PC-3 (cell line): ENCODE measurements at regions of chr13 and their contacts with region 1.

Region 1: DNA sequence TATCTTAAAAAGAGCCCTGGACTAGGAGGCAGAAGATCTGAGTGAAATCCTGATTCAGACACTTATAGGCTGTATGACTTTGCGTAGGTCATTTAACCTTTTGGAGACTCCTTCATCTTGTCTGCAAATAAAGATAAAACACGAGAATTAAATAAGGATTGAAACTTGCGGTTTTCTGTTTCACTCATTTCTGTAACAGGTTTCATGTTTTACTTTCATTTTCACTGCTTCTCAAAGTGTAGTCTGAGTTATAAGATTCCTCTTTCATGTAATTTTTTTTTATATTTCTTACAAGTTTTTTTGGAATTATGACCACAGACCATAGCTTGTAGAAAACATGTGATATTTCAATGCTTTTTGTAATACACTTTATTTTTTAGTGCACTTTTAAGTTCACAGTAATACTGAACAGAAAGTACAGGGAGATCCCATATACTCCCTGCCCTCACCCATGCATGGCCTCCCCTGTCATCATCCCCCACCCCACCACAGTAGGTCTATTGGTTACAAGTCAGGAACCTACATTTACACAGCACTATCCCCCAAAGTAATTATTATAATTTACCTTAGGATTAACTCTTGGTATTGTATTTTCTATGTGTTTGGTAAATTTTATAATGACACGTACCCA is 174.6 kb downstream of the ITGBL1 start:
- DNase-seq: peak; percentile 7
- ATAC-seq: peak; percentile 25
- H3K4me3 ChIP-seq: peak overlapping the region; percentile 64
- H3K27ac ChIP-seq: peak overlapping the region; percentile 76
- H3K4me1 ChIP-seq: peaks cover 52% of the 10 kb centered on the region
- H3K27me3 ChIP-seq: no peaks in the 10 kb centered on the region
- CTCF ChIP-seq: no peak

Region 2: DNA sequence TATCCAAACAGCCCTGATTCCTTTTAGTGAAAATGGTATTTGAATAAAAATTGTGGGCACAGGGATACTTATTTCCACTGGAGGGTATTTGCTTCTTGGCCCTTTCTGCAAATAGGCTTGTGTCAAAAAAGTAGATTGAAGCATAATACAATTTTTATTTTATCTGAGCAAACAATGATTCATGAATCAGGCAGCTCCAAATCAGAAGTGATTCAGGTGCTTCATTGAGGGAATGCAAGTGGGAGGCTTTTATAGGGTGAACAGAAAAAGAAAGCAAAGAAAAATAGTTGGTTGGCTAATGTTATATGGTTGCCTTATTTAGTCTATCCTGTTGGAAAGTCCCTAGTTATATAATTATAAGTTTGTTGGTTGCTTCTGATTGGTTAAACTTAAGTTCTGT is 56.6 kb before region 1 on chr13:
- CTCF ChIA-PET with region 1: no interaction called
- POLR2A ChIA-PET with region 1: no interaction called
- intact Hi-C with region 1: loop called (anchors 1 kb)
- DNase-seq: peak; percentile 86
- ATAC-seq: peak; percentile 92
- H3K4me3 ChIP-seq: peak overlapping the region; percentile 10; the same call in 1 of the 2 replicates
- H3K27ac ChIP-seq: peak overlapping the region; percentile 85
- H3K4me1 ChIP-seq: peaks cover 40% of the 10 kb centered on the region
- H3K27me3 ChIP-seq: no peaks in the 10 kb centered on the region
- CTCF ChIP-seq: no peak

Region 3: DNA sequence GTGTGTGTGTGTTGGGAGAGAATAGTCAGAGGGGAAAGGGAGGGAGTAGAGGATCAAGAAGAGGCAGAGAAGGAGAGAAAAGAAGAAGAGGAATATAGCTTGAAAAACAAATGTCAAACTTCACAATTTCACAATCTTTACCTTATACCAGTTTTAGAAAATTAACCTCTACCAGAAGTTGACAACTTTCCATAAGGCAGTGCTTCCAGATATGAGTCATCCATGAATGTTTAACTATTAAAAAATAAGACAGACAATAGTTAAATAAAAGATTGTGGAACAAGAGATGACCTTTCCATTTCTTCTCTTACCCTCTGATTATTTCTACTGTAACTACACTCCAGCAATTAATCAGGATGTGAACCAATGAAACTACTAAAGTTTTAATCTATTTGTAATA is 54.8 kb after region 1 on chr13:
- CTCF ChIA-PET with region 1: no interaction called
- POLR2A ChIA-PET with region 1: no interaction called
- intact Hi-C with region 1: loop called (anchors 5 kb)
- DNase-seq: peak; percentile 53
- ATAC-seq: peak; percentile 64
- H3K4me3 ChIP-seq: no peak overlapping the region
- H3K27ac ChIP-seq: no peak overlapping the region
- H3K4me1 ChIP-seq: peaks cover 22% of the 10 kb centered on the region
- H3K27me3 ChIP-seq: no peaks in the 10 kb centered on the region
- CTCF ChIP-seq: no peak